Panc1 (cell line): ENCODE measurements at regions of chr1 and their contacts with region 1.

Region 1: DNA sequence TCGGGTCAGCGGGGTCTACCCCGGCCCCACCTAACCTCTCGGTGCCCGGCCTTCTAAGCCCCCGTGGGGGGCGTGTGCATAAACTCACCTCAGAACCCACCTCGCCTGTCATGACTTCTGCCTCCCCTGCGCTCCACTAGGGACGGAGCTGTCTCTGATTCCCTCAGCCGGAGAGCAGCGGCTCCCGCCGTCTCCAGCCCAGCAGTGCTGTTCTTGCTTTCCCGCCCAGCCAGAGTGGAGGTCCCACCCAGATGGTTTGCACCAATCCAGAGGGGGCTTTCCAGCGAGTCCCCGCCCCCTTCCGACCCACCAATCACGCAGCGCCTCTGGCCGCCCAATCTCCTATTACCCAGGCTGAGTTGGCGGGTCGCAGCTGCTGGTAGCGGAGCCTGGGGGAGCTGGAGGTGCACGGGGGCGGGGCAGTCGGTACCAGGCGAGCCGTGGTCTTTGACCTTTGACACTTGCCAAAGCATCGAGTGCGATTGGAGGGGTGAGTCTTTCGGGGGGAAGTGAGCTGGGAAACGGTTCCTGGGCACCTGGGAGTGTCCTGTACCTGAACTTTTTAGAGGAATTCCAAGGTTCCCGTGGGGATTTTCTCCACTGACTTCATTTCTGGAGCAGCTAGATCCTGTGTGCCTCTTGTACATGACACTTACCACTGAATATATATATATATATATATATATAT is at the start of gene CLSPN:
- DNase-seq: peak; percentile 80
- ATAC-seq: peak; percentile 98
- H3K4me3 ChIP-seq: peak within 1 kb of the TSS; percentile 73 to 87
- H3K27ac ChIP-seq: peak within 1 kb of the TSS; percentile 88
- H3K4me1 ChIP-seq: peaks cover 10% of the 10 kb centered on the region
- H3K27me3 ChIP-seq: no peaks in the 10 kb centered on the region
- CTCF ChIP-seq: no peak
- total RNA-seq, gene CLSPN: 52.1 TPM

Region 2: GRCh38 chr1:35451125-35451528 is 318.8 kb before region 1 on chr1:
- CTCF ChIA-PET with region 1: no interaction called
- POLR2A ChIA-PET with region 1: no interaction called
- in situ Hi-C with region 1: no loop called
- intact Hi-C with region 1: loop called (anchors 10 kb)
- DNase-seq: peak; percentile 46
- ATAC-seq: peak; percentile 96
- H3K4me3 ChIP-seq: no peak overlapping the region
- H3K27ac ChIP-seq: peak overlapping the region; percentile 64; the same call in 1 of the 2 replicates
- H3K4me1 ChIP-seq: peaks cover 20% of the 10 kb centered on the region
- H3K27me3 ChIP-seq: no peaks in the 10 kb centered on the region
- CTCF ChIP-seq: peak; percentile 94

Region 3: DNA sequence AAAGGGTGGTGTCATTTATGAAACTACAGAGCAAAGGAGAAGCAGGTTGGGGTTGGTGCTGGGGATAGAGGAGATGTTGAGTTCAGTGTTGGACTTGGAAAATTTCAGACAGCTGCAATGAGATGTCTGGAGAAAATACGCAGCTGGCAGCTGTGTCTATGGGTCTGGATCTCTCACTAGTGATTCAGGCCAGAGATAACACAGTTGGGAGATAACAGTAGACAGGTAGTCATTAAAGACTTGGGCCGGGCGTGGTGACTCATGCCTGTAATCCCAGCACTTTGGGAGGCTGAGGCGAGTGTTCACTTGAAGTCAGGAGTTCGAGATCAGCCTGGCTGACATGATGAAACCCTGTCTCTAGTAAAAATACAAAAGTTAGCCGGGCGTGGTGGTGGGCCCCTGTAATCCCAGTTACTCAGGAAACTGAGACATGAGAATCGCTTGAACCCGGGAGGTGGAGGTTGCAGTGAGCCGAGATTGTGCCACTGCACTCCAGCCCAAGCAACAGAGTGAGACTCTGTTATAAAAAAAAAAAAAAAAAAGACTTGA is 199.2 kb before region 1 on chr1:
- CTCF ChIA-PET with region 1: interaction called, 13 read pairs
- POLR2A ChIA-PET with region 1: no interaction called
- in situ Hi-C with region 1: no loop called
- intact Hi-C with region 1: loop called (anchors 2 kb)
- DNase-seq: no peak
- ATAC-seq: no peak
- H3K4me3 ChIP-seq: no peak overlapping the region
- H3K27ac ChIP-seq: no peak overlapping the region
- H3K4me1 ChIP-seq: peaks cover 4% of the 10 kb centered on the region
- H3K27me3 ChIP-seq: no peaks in the 10 kb centered on the region
- CTCF ChIP-seq: no peak